A673 (cell line): ENCODE measurements at regions of chr11 and their contacts with region 1.

Region 1: DNA sequence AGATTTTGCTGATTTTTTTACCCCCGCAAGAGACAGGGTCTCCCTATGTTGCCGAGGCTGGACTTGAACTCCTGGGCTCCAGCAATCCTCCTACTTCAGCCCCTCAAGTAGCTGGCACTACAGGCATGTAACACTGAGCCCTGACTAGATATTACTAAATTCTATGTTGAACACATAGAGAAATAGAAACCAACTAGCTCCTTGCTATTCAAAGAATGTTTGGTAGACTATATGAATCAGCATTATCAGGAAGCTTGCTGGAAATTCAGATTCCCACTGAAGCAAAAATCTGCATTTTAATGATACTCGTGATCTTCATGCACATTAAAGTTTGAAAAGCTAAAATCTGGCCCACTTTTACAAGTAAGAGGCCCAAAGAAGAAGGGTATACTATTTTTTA is 11.9 kb downstream of the TMEM41B start:
- DNase-seq: no peak
- H3K4me3 ChIP-seq: no peak overlapping the region
- H3K27ac ChIP-seq: no peak overlapping the region
- H3K4me1 ChIP-seq: no peaks in the 10 kb centered on the region
- H3K27me3 ChIP-seq: no peaks in the 10 kb centered on the region
- CTCF ChIP-seq: no peak

Region 2: DNA sequence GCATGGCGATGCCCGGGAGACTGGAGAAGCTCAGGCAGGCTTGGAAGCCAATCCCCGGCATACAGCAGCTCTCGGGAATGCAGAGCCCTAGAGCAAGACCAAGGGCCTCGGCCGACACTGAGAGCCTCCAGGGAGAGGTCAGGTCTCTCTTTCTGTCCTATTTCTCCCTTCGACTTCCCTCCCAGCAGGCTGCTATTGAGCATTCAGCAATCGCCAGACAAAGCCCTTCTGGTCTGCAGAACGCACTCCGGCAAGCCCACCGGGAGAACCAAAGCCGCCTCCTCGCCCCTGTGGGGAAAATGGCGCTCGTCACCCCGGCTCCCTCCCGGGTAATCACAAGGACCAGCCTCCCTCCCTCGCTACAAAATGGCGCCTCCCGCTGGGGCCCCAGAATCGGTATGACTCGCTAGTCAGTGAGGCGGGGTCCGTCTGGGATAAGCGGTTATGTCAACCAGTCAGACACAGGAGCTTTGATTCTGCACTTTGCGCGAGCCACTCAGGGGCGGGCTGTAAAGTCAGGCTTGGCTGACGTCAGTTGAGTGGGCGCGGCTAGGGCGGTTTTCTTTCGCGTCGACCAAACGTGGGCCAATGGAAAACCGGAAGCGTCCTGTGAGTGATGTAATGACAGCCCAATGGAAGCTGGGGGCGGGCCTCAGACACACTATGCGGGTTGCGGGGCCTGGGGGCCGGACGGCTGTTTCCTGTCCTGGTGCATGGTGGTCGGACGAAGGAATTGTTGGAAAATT is 158.0 kb after region 1 on chr11 and contains the start of gene ZNF143:
- CTCF ChIA-PET with region 1: no interaction called
- POLR2A ChIA-PET with region 1: interaction called, 14 read pairs
- intact Hi-C with region 1: no loop called
- DNase-seq: peak; percentile 99
- H3K4me3 ChIP-seq: peak within 1 kb of the TSS; percentile 86
- H3K27ac ChIP-seq: peak within 1 kb of the TSS; percentile 99
- H3K4me1 ChIP-seq: no peaks in the 10 kb centered on the region
- H3K27me3 ChIP-seq: no peaks in the 10 kb centered on the region
- CTCF ChIP-seq: no peak
- total RNA-seq, gene ZNF143: 29.5 and 32.1 TPM in 2 replicates